GM12878 (cell line): ENCODE measurements at regions of chr4 and their contacts with region 1.

Region 1: DNA sequence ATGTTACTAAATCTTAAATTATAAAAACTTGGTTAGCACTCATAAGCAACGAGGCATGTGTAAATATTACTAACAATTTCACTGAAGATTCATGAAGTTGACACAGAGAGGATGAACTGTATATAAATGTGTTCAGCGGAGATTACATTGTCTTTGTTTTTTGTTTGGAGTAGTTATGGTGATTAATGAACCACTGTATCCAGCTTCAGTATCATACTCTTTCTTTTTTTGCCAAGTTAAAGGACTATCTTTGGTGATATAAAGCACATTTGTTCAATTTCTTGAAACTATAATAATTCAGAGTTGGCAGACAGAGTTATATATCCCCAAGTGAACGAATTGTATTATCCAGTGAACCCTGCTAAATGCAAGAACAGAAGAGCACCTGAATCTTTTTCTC is 497.6 kb downstream of the CCSER1 start:
- DNase-seq: no peak
- ATAC-seq: no peak
- H3K4me3 ChIP-seq: no peak overlapping the region
- H3K27ac ChIP-seq: no peak overlapping the region
- H3K4me1 ChIP-seq: no peaks in the 10 kb centered on the region
- H3K27me3 ChIP-seq: no peaks in the 10 kb centered on the region
- CTCF ChIP-seq: no peak
- EP300 ChIP-seq: no peak
- POLR2A ChIP-seq: no peak
- RAD21 ChIP-seq: no peak

Region 2: DNA sequence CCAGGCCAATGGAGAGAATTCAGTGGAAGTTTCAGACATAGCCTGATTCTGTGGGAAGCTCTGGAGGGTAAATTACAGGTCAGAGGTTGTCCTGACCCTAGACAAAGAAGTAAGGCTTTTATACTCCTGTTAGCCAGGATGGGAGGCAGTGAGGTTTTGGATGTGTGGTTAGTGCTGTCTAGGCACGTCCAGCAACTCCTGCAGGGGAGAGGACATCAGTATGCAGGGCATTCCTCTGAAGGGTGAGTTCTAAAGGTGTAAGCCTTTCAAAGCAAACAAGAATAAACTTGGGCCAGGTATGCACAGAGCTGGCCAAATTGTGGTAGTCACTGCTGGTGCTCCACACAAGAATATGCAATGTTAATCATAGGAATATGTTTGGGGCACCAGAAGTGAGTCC is 65.0 kb after region 1 on chr4:
- CTCF ChIA-PET with region 1: no interaction called
- POLR2A ChIA-PET with region 1: no interaction called
- RAD21 ChIA-PET with region 1: no interaction called
- SMC1A ChIA-PET with region 1: no interaction called
- in situ Hi-C with region 1: loop called (anchors 10 kb)
- intact Hi-C with region 1: no loop called
- DNase-seq: no peak
- ATAC-seq: no peak
- H3K4me3 ChIP-seq: no peak overlapping the region
- H3K27ac ChIP-seq: no peak overlapping the region
- H3K4me1 ChIP-seq: no peaks in the 10 kb centered on the region
- H3K27me3 ChIP-seq: no peaks in the 10 kb centered on the region
- CTCF ChIP-seq: no peak
- EP300 ChIP-seq: no peak
- POLR2A ChIP-seq: no peak
- RAD21 ChIP-seq: no peak